ENCODE measurements at regions of chr5 and their contacts with region 1.

Region 1: DNA sequence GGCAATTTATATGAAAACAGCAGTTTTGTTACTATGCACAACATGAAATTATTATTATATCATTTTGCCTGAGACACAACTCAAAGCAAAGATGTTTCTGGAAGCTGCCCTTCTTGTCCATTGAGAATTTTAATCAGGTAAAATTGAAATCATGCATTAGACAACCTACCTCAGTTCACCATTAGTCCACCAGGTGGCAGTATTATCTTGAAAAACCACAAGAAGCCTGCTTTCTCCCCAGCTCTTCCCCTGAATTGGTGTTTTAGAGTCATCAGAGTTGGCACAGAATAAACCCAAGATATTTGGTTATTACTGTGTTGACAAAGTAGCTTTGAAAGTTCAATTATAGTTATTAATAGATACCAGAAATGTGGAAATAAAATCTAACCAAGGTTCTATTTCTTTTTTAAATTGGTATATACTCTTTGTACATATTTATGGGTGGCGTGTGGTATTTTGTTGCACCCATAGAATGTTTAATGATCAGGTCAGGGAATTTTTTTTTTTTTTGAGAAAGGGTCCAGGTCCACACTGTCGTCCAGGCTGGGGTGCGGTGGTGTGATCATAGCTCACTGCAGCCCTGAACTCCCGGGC is 25.7 kb downstream of the UTP15 start:
- DNase-seq: peak; percentile 28
- ATAC-seq: peak; percentile 88
- H3K4me3 ChIP-seq: no peak overlapping the region
- H3K27ac ChIP-seq: no peak overlapping the region
- H3K4me1 ChIP-seq: no peaks in the 10 kb centered on the region
- H3K27me3 ChIP-seq: no peaks in the 10 kb centered on the region
- CTCF ChIP-seq: peak; percentile 62 to 87 (median 71)
- EP300 ChIP-seq: no peak
- POLR2A ChIP-seq: no peak
- RAD21 ChIP-seq: peak; percentile 96

Region 2: DNA sequence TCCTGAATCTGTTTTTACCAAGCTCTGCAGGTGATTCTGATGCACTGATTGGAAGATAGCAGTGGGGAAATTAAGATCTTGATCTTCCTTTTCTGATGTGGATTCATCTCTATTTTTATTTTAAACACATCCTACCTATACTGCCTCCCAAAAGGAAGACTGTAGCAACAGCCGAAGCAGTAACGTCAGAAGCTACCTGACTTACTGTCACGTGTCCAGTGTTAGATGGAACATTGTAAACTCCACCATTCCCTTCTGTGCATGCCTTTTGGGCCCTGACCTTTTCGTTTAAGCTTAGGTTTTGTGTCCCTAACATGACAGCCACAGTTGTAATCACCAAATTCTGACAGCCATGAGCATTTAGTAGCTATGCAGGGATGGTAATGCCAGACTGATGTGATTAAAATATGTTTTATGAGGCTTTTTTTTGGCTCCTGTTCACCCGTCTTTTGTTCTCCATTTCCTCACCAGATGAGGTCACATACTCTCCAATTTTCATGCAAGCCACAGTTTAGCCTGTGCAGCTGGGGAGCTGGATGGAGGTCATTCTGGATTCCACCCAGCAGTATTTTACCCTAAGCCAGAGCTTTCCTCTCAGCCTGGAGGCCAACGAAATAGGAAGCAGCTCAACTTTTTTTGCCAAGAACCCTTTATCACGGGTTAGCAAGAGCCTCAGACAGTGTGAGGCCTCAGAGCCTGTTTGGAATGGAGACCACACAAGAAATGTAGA is 127.0 kb before region 1 on chr5:
- CTCF ChIA-PET with region 1: no interaction called
- POLR2A ChIA-PET with region 1: no interaction called
- RAD21 ChIA-PET with region 1: no interaction called
- SMC1A ChIA-PET with region 1: no interaction called
- in situ Hi-C with region 1: no loop called
- intact Hi-C with region 1: no loop called
- DNase-seq: no peak
- ATAC-seq: no peak
- H3K4me3 ChIP-seq: no peak overlapping the region
- H3K27ac ChIP-seq: no peak overlapping the region
- H3K4me1 ChIP-seq: no peaks in the 10 kb centered on the region
- H3K27me3 ChIP-seq: peaks cover 0 to 4% of the 10 kb centered on the region in 2 experiments; a peak in 1 of 4 replicates
- CTCF ChIP-seq: no peak
- EP300 ChIP-seq: no peak
- POLR2A ChIP-seq: no peak
- RAD21 ChIP-seq: no peak

Region 3: DNA sequence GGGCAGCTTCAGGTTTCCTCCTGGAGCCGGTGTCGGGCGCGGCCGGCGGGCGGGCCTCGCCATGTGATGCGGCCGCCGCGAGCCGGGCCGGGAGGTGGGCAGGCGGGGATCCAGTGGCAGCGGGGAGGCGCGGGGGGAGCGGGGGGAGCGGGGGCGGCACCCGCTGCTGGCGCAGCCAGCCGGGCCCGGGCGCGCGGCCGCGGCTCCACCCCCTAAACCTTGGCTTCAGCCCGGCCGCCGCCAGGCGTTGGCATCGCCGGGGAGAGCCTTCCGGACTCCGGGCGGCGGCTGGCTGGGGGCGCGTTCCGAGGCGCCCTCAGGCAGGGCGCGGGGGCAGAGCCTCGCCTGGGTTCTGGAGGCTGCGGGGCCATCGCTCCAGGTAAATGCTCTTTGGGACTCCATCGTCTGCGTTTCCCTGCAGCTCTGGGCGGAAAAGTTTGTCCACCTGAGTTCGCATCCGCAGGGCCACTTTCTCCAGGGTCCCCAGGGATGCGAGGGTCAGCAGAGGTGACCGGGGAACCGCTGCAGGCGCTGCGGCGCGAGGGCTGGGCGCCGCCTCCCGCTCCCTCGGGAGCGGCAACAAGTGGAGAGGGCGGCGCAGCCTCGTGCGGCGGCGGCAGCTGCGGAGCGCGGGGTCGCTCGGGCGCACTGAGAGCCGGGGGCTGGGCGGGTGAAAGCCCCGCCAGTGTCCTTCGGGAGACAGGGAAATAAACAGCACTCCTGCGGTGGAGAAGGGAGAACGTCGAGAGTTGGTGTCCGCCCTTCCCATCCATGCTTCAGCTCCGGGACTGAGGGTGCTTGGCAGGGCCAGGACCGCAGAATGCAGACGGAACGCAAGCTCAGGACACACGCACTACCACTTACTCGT is 35.0 kb after region 1 on chr5 and contains the start of gene ARHGEF28:
- CTCF ChIA-PET with region 1: interaction called, 9 read pairs
- POLR2A ChIA-PET with region 1: no interaction called
- RAD21 ChIA-PET with region 1: interaction called, 11 read pairs
- SMC1A ChIA-PET with region 1: interaction called, 6 read pairs
- in situ Hi-C with region 1: no loop called
- intact Hi-C with region 1: loop called (anchors 5 kb)
- DNase-seq: no peak
- ATAC-seq: peak; percentile 84
- H3K4me3 ChIP-seq: peak within 1 kb of the TSS; percentile 71
- H3K27ac ChIP-seq: no peak within 1 kb of the TSS
- H3K4me1 ChIP-seq: no peaks in the 10 kb centered on the region
- H3K27me3 ChIP-seq: peaks cover 0 to 5% of the 10 kb centered on the region in 2 experiments; a peak in 2 of 4 replicates
- CTCF ChIP-seq: no peak
- EP300 ChIP-seq: no peak
- POLR2A ChIP-seq: no peak
- RAD21 ChIP-seq: no peak
- polyA plus RNA-seq, gene ARHGEF28: not detected

Region 4: DNA sequence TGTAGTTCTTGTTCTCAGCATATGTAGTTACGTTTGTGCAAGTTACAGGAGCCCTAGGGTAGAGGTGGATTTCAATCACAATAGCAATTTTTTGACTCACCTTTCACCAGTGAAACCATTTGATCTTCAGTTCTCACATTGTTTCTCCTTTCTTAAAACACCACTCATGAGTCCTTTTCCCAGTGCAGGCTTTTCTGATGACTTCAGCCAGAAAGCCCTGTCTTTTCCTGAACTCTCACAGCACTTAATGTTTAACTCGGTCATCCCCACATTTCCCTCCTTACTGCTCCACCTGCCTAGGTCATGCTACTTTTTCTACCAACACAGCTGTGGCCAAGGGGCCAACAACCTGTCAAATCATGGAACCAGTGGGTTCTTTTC is 72.7 kb after region 1 on chr5:
- CTCF ChIA-PET with region 1: interaction called, 3 read pairs
- POLR2A ChIA-PET with region 1: no interaction called
- RAD21 ChIA-PET with region 1: interaction called, 3 read pairs
- SMC1A ChIA-PET with region 1: interaction called, 27 read pairs
- in situ Hi-C with region 1: no loop called
- intact Hi-C with region 1: no loop called
- DNase-seq: peak; percentile 76
- ATAC-seq: peak; percentile 64
- H3K4me3 ChIP-seq: no peak overlapping the region
- H3K27ac ChIP-seq: peak overlapping the region; percentile 69
- H3K4me1 ChIP-seq: peaks cover 30% of the 10 kb centered on the region
- H3K27me3 ChIP-seq: no peaks in the 10 kb centered on the region
- CTCF ChIP-seq: no peak
- EP300 ChIP-seq: peak in 1 of 2 experiments; percentile 33; a peak in 1 of 4 replicates
- POLR2A ChIP-seq: no peak
- RAD21 ChIP-seq: no peak

Region 5: DNA sequence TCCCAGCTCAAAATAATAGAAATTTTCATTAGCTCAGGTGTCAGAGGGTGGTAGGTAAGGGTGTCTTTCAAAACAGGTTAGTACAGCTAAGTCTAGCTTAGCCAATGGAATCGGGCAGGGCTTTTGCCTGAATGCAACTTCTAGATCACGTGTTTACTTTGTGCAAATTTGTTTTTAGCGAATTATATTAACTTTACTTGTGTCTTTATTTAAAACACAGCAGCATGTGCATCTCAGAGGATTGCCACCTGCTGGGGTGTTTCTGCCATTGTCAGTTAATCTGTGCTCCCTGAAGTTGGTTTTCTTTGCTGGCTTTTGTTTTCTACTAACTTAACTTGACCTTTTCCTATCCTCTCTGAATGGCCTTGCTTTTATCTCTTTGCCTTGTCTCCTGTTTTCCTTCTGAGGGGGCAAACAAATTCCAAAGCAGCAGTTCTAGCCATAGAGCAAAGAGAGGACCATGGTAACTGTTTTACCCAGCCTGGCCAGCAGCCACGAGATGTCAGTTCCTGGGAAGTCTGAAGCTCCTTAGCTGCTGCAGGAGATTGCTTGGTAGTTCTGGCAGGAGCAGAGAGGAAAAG is 102.4 kb after region 1 on chr5:
- CTCF ChIA-PET with region 1: interaction called, 90 read pairs
- POLR2A ChIA-PET with region 1: no interaction called
- RAD21 ChIA-PET with region 1: interaction called, 40 read pairs
- SMC1A ChIA-PET with region 1: interaction called, 64 read pairs
- in situ Hi-C with region 1: no loop called
- intact Hi-C with region 1: loop called (anchors 2 kb)
- DNase-seq: no peak
- ATAC-seq: peak; percentile 37
- H3K4me3 ChIP-seq: no peak overlapping the region
- H3K27ac ChIP-seq: peak overlapping the region; percentile 14; the same call in 1 of the 2 replicates
- H3K4me1 ChIP-seq: peaks cover 17% of the 10 kb centered on the region
- H3K27me3 ChIP-seq: no peaks in the 10 kb centered on the region
- CTCF ChIP-seq: peak; percentile 36 to 60 (median 38); a peak in 5 of 6 replicates
- EP300 ChIP-seq: no peak
- POLR2A ChIP-seq: no peak
- RAD21 ChIP-seq: peak; percentile 42

Region 6: GRCh38 chr5:73759771-73760170 is 168.6 kb after region 1 on chr5:
- CTCF ChIA-PET with region 1: interaction called, 5 read pairs
- POLR2A ChIA-PET with region 1: no interaction called
- RAD21 ChIA-PET with region 1: no interaction called
- SMC1A ChIA-PET with region 1: interaction called, 11 read pairs
- in situ Hi-C with region 1: no loop called
- intact Hi-C with region 1: no loop called
- DNase-seq: no peak
- ATAC-seq: peak; percentile 67
- H3K4me3 ChIP-seq: no peak overlapping the region
- H3K27ac ChIP-seq: no peak overlapping the region
- H3K4me1 ChIP-seq: no peaks in the 10 kb centered on the region
- H3K27me3 ChIP-seq: no peaks in the 10 kb centered on the region
- CTCF ChIP-seq: no peak
- EP300 ChIP-seq: no peak
- POLR2A ChIP-seq: no peak
- RAD21 ChIP-seq: no peak

Region 7: GRCh38 chr5:73902327-73903051 is 311.3 kb after region 1 on chr5:
- CTCF ChIA-PET with region 1: interaction called, 21 read pairs
- POLR2A ChIA-PET with region 1: no interaction called
- RAD21 ChIA-PET with region 1: no interaction called
- SMC1A ChIA-PET with region 1: interaction called, 8 read pairs
- in situ Hi-C with region 1: no loop called
- intact Hi-C with region 1: loop called (anchors 2 kb)
- DNase-seq: peak; percentile 55
- ATAC-seq: peak; percentile 3; the same call in 1 of the 3 replicates
- H3K4me3 ChIP-seq: no peak overlapping the region
- H3K27ac ChIP-seq: no peak overlapping the region
- H3K4me1 ChIP-seq: peaks cover 12% of the 10 kb centered on the region
- H3K27me3 ChIP-seq: peaks cover 0 to 7% of the 10 kb centered on the region in 2 experiments; a peak in 1 of 4 replicates
- CTCF ChIP-seq: peak; percentile 33 to 72 (median 68); a peak in 5 of 6 replicates
- EP300 ChIP-seq: no peak
- POLR2A ChIP-seq: no peak
- RAD21 ChIP-seq: peak; percentile 86

Measured in GM12878 (cell line).